ENCODE measurements at regions of chr1 and their contacts with region 1.

Region 1: DNA sequence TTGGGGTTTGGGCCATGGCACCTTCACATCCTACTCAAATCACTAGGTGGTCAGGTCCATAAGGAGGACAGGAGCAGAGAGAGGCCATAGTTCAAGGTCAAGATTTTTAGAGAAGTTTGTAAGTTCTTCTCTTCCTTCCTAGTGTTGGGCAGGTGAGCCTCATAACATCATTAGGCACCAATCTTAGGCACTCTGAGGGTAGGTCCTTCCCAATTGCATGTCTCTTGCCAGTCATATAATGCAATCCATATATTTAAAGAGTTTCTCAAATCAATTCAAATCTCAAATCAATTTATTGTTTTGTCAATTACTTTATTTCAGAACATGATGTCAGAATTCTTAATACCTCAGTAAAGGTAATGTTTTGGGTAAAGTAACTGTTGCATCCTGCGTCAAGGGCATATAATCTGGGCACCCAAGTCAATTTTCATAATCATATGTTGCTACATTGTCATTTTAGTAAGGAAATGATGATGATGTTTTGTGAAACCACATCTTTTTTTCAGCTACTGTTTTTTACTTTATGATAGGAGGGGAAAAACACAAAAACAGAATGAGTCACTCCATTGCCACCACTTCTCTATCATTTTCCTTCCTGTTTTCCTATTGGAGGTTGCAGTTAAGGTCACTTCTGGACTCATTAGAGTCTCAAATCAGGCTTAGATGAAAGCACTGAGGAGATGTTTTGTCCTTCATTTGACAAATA is 122.7 kb downstream of the UCHL5 start:
- DNase-seq: no peak
- H3K4me3 Mint-ChIP-seq: peak overlapping the region; percentile 9
- H3K27ac Mint-ChIP-seq: peak overlapping the region; percentile 85
- H3K4me1 Mint-ChIP-seq: peaks cover 41% of the 10 kb centered on the region
- H3K27me3 Mint-ChIP-seq: no peaks in the 10 kb centered on the region

Region 2: GRCh38 chr1:192545896-192546521 is 390.5 kb before region 1 on chr1:
- intact Hi-C with region 1: loop called (anchors 2 kb)
- DNase-seq: no peak
- H3K4me3 Mint-ChIP-seq: no peak overlapping the region
- H3K27ac Mint-ChIP-seq: peak overlapping the region; percentile 74
- H3K4me1 Mint-ChIP-seq: peaks cover 79% of the 10 kb centered on the region
- H3K27me3 Mint-ChIP-seq: no peaks in the 10 kb centered on the region

Region 3: GRCh38 chr1:192913683-192914082 is 22.8 kb before region 1 on chr1:
- intact Hi-C with region 1: loop called (anchors 1 kb)
- DNase-seq: no peak
- H3K4me3 Mint-ChIP-seq: no peak overlapping the region
- H3K27ac Mint-ChIP-seq: no peak overlapping the region
- H3K4me1 Mint-ChIP-seq: no peaks in the 10 kb centered on the region
- H3K27me3 Mint-ChIP-seq: peaks cover 3% of the 10 kb centered on the region

Region 4: GRCh38 chr1:192998536-192998935 is 62.1 kb after region 1 on chr1:
- intact Hi-C with region 1: loop called (anchors 5 kb)
- DNase-seq: no peak
- H3K4me3 Mint-ChIP-seq: no peak overlapping the region
- H3K27ac Mint-ChIP-seq: no peak overlapping the region
- H3K4me1 Mint-ChIP-seq: peaks cover 11% of the 10 kb centered on the region
- H3K27me3 Mint-ChIP-seq: no peaks in the 10 kb centered on the region

Region 5: GRCh38 chr1:193059268-193060225 is 123.1 kb after region 1 on chr1 and contains the starts of genes RO60 and UCHL5:
- intact Hi-C with region 1: loop called (anchors 1 kb)
- DNase-seq: peak; percentile 95
- H3K4me3 Mint-ChIP-seq: peak within 1 kb of the TSS; percentile 94
- H3K27ac Mint-ChIP-seq: peak within 1 kb of the TSS; percentile 100
- H3K4me1 Mint-ChIP-seq: peaks cover 59% of the 10 kb centered on the region
- H3K27me3 Mint-ChIP-seq: no peaks in the 10 kb centered on the region
- total RNA-seq, gene RO60: 68.7 and 70.0 TPM in 2 replicates
- total RNA-seq, gene UCHL5: 88.1 and 93.1 TPM in 2 replicates

Measured in activated T-helper 1 cell treated with anti-CD3 and anti-CD28 coated beads, Interleukin-12 subunit alpha, Interleukin-12 subunit beta, Interleukin-2, Interleukin-4 antibody, amounts not matched to agents 30 ng/mL and 10 ng/mL and 1 ng/mL, durations not matched to agents 14 hours and 24 hours and 36 hours (primary cell).